ENCODE measurements at regions of chr10 and their contacts with region 1.

Region 1: DNA sequence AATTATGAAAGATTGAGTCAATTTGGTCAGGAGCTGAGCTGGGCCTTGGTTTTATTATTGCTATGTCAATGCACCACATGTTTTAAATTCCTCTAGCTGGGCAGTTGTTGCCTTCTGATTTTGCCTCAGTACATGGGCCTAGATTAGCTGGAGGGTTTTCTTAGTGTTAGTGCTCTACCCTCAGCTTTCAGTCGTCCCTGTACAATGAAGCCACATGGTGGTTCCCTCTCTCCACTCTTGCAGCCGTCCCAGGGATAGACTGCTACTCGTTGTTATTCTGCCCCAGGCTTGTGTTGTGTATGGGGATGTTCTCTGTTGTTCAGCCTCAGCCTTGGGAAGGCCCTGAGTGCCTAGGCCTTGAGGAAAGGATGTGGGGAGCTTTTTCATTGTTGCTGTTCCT is 37.0 kb downstream of the NHLRC2 start:
- DNase-seq: peak in 1 of 5 donors; percentile 13
- ATAC-seq: peak; percentile 82 to 94 (median 87)
- H3K4me3 ChIP-seq: no peak overlapping the region
- H3K27ac ChIP-seq: peak overlapping the region in 9 of 12 donors; percentile 12 to 70 (median 32)
- H3K4me1 ChIP-seq: peaks cover 0 to 52% (median 9%) of the 10 kb centered on the region in 12 donors
- H3K27me3 ChIP-seq: no peaks in the 10 kb centered on the region
- CTCF ChIP-seq: peak in 5 of 12 donors; percentile 16 to 31 (median 21)
- POLR2A ChIP-seq: no peak

Region 2: DNA sequence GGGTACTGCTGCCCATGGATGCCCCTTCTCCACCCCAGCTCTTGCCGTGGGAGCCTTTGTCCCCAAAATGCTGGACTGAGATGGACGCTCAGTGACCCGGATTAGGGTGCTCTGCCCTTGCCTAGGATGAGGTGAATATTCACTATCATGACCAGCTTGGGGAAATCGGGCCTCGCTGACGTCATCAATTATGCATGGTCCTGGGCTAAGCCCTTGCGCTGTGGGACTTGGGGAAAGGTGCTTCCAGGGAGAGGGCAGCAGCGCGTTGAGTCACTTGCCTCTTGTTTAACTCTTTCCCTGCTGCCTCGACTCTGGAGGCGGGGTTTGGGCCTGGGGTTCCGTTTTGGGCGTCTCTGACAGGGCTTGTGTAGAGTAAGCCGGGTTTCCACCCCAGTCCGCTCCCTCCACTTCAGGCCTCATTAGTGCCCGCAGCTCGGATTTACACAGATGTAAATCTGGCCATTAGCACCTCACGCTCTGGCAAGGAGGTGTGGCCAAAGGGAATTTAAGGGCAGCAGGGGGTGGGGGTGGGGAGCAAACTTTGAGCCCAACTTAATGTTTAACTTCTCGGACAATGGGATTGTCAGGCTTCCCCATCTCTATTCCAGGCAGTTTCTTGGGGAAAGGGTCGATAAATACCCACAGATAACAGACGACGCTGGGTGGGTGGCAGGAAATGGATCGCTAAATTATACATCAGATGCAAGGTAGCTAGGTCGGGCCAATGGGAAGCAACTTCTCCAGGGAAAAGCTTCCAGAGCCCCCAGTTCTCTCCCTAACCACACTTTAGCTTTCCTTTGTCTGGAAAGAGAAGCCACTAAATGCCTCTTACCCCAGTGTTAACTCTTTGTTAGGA is 992.7 kb before region 1 on chr10:
- intact Hi-C with region 1: no loop called
- DNase-seq: peak in 1 of 5 donors; percentile 26
- ATAC-seq: peak; percentile 30 to 42 (median 40)
- H3K4me3 ChIP-seq: peak overlapping the region in 7 of 12 donors; percentile 12 to 42 (median 30)
- H3K27ac ChIP-seq: no peak overlapping the region
- H3K4me1 ChIP-seq: peaks cover 0 to 7% (median 0%) of the 10 kb centered on the region in 12 donors
- H3K27me3 ChIP-seq: no peaks in the 10 kb centered on the region
- CTCF ChIP-seq: no peak
- POLR2A ChIP-seq: no peak

Region 3: GRCh38 chr10:114068054-114068707 is 176.7 kb after region 1 on chr10:
- intact Hi-C with region 1: loop called in 1 of 10 experiments (anchors 10 kb)
- DNase-seq: peak in 1 of 5 donors; percentile 39
- ATAC-seq: no peak
- H3K4me3 ChIP-seq: no peak overlapping the region
- H3K27ac ChIP-seq: peak overlapping the region in 11 of 12 donors; percentile 28 to 87 (median 78)
- H3K4me1 ChIP-seq: peaks cover 0 to 49% (median 29%) of the 10 kb centered on the region in 12 donors
- H3K27me3 ChIP-seq: no peaks in the 10 kb centered on the region
- CTCF ChIP-seq: no peak
- POLR2A ChIP-seq: no peak

Region 4: DNA sequence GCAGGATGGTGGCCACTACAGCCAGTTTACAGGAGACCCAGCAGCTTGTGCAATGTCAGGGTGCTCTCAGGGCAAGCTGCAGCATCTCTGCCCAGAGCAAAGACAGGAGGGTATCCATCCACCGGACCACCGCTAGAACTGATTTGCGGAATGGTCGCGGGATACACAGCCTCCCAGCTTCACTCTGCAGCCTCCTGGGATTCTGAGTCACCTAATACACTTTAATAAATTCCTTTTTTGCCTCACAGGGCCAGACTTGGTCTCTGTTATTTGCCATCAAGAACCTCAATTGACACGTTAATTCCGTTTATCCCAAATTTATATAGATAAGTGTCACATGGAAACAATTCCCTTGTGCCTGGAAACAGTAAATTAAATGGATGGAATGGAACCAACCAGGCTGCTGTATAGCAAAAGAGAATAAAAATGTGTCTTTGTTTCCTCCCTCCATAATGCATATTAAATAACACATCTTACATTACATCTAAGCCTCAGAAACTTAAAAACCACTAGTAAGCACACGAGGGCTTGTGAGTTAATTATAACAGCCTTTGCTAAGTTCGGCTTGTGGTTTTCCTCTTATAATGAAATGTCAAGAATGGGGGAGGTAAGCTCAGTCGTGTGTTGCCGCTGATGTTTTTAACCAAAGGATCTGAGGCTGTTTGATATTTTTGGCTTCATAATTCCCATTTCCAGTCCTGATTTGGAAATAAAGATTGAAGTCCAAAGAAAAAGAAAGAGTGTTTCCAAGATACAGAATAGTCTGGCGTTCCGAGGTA is 204.3 kb after region 1 on chr10:
- intact Hi-C with region 1: loop called in 3 of 10 experiments (anchors 5 to 10 kb)
- DNase-seq: no peak
- ATAC-seq: no peak
- H3K4me3 ChIP-seq: no peak overlapping the region
- H3K27ac ChIP-seq: no peak overlapping the region
- H3K4me1 ChIP-seq: peaks cover 0 to 34% (median 3%) of the 10 kb centered on the region in 12 donors
- H3K27me3 ChIP-seq: peaks cover 0 to 2% (median 0%) of the 10 kb centered on the region in 9 donors
- CTCF ChIP-seq: no peak
- POLR2A ChIP-seq: no peak

Measured in heart left ventricle (tissue), 16 donors.